Natural killer cell (primary cell): ENCODE measurements at regions of chr6 and their contacts with region 1.

Region 1: GRCh38 chr6:25263657-25264056 is 15.5 kb upstream of the CARMIL1 start:
- DNase-seq: no peak
- ATAC-seq: no peak
- H3K4me3 ChIP-seq: no peak overlapping the region
- H3K4me3 Mint-ChIP-seq: no peak overlapping the region
- H3K27ac ChIP-seq: no peak overlapping the region
- H3K27ac Mint-ChIP-seq: no peak overlapping the region
- H3K4me1 ChIP-seq: no peaks in the 10 kb centered on the region
- H3K4me1 Mint-ChIP-seq: no peaks in the 10 kb centered on the region
- H3K27me3 ChIP-seq: no peaks in the 10 kb centered on the region
- H3K27me3 Mint-ChIP-seq: peaks cover 13 to 19% of the 10 kb centered on the region in 2 donors
- CTCF ChIP-seq: no peak

Region 2: GRCh38 chr6:24883618-24884017 is 380.0 kb before region 1 on chr6:
- intact Hi-C with region 1: no loop called
- DNase-seq: peak in 1 of 2 donors; percentile 40
- ATAC-seq: peak in 1 of 3 donors; percentile 58
- H3K4me3 ChIP-seq: no peak overlapping the region
- H3K4me3 Mint-ChIP-seq: peak overlapping the region; percentile 18
- H3K27ac ChIP-seq: peak overlapping the region; percentile 12
- H3K27ac Mint-ChIP-seq: peak overlapping the region; percentile 90 to 93
- H3K4me1 ChIP-seq: peaks cover 42% of the 10 kb centered on the region
- H3K4me1 Mint-ChIP-seq: peaks cover 91 to 92% of the 10 kb centered on the region in 2 donors
- H3K27me3 ChIP-seq: no peaks in the 10 kb centered on the region
- H3K27me3 Mint-ChIP-seq: no peaks in the 10 kb centered on the region
- CTCF ChIP-seq: no peak

Region 3: GRCh38 chr6:25490018-25490801 is 226.6 kb after region 1 on chr6:
- intact Hi-C with region 1: loop called (anchors 1 kb)
- DNase-seq: peak; percentile 38 to 84
- ATAC-seq: peak; percentile 68 to 86 (median 70)
- H3K4me3 ChIP-seq: no peak overlapping the region
- H3K4me3 Mint-ChIP-seq: no peak overlapping the region
- H3K27ac ChIP-seq: no peak overlapping the region
- H3K27ac Mint-ChIP-seq: no peak overlapping the region
- H3K4me1 ChIP-seq: peaks cover 5% of the 10 kb centered on the region
- H3K4me1 Mint-ChIP-seq: no peaks in the 10 kb centered on the region
- H3K27me3 ChIP-seq: no peaks in the 10 kb centered on the region
- H3K27me3 Mint-ChIP-seq: peaks cover 0 to 8% of the 10 kb centered on the region in 2 donors
- CTCF ChIP-seq: peak; percentile 75

Region 4: GRCh38 chr6:25556516-25556915 is 292.9 kb after region 1 on chr6:
- intact Hi-C with region 1: loop called (anchors 1 kb)
- DNase-seq: peak; percentile 50 to 86
- ATAC-seq: peak in 1 of 3 donors; percentile 70
- H3K4me3 ChIP-seq: no peak overlapping the region
- H3K4me3 Mint-ChIP-seq: no peak overlapping the region
- H3K27ac ChIP-seq: no peak overlapping the region
- H3K27ac Mint-ChIP-seq: no peak overlapping the region
- H3K4me1 ChIP-seq: no peaks in the 10 kb centered on the region
- H3K4me1 Mint-ChIP-seq: peaks cover 0 to 4% of the 10 kb centered on the region in 2 donors
- H3K27me3 ChIP-seq: no peaks in the 10 kb centered on the region
- H3K27me3 Mint-ChIP-seq: peaks cover 13 to 38% of the 10 kb centered on the region in 2 donors
- CTCF ChIP-seq: peak; percentile 76

Region 5: GRCh38 chr6:25601800-25602673 is 338.4 kb after region 1 on chr6:
- intact Hi-C with region 1: loop called (anchors 1 kb)
- DNase-seq: peak in 1 of 2 donors; percentile 77
- ATAC-seq: peak in 1 of 3 donors; percentile 40
- H3K4me3 ChIP-seq: no peak overlapping the region
- H3K4me3 Mint-ChIP-seq: no peak overlapping the region
- H3K27ac ChIP-seq: no peak overlapping the region
- H3K27ac Mint-ChIP-seq: no peak overlapping the region
- H3K4me1 ChIP-seq: no peaks in the 10 kb centered on the region
- H3K4me1 Mint-ChIP-seq: no peaks in the 10 kb centered on the region
- H3K27me3 ChIP-seq: no peaks in the 10 kb centered on the region
- H3K27me3 Mint-ChIP-seq: peaks cover 5 to 12% of the 10 kb centered on the region in 2 donors
- CTCF ChIP-seq: peak; percentile 73

Region 6: GRCh38 chr6:26054857-26055669 is 791.4 kb after region 1 on chr6:
- intact Hi-C with region 1: no loop called
- DNase-seq: peak; percentile 83 to 92
- ATAC-seq: peak; percentile 71 to 82 (median 71)
- H3K4me3 ChIP-seq: peak overlapping the region; percentile 78
- H3K4me3 Mint-ChIP-seq: peak overlapping the region; percentile 96
- H3K27ac ChIP-seq: peak overlapping the region; percentile 92
- H3K27ac Mint-ChIP-seq: peak overlapping the region; percentile 98 to 99
- H3K4me1 ChIP-seq: peaks cover 19% of the 10 kb centered on the region
- H3K4me1 Mint-ChIP-seq: peaks cover 29 to 35% of the 10 kb centered on the region in 2 donors
- H3K27me3 ChIP-seq: no peaks in the 10 kb centered on the region
- H3K27me3 Mint-ChIP-seq: no peaks in the 10 kb centered on the region
- CTCF ChIP-seq: no peak